ENCODE measurements at regions of chr15 and their contacts with region 1.

Region 1: DNA sequence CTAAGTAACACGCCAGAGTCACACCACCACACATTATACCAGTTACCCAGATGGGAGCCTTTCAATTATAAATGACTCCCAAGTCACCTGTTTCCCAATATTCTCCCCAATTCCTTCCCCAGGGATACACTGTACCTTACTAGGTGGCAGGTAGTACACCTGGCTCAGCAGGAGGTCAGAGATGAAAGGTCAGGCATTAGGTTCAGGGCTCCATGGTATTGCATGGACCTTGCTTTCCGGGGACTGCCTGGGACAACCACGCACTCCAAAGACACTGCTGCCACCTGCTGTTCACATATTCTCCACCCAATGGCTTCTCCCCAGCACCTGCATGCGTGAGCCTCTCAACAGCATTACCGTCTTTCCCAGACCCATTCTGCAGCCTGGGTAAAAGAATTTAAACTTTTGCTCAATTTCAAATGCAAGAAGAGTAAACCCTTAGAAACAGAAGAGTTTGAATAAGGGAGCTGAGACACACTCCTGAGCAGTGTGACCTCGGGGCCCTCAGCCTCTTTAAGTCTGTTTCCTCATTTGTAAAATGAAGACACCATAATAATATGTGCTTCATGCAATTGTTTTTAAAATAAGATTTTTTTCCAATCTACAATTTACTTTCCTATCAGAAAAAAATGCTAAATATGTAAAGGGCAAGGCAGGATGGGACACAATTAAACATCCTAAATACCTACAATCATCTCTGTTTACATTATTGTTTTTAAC is 28.0 kb upstream of the LACTB start:
- DNase-seq: peak; percentile 56
- H3K4me3 Mint-ChIP-seq: no peak overlapping the region
- H3K27ac Mint-ChIP-seq: no peak overlapping the region
- H3K4me1 Mint-ChIP-seq: peaks cover 5% of the 10 kb centered on the region
- H3K27me3 Mint-ChIP-seq: peaks cover 4% of the 10 kb centered on the region

Region 2: GRCh38 chr15:62782039-62782791 is 311.4 kb before region 1 on chr15:
- intact Hi-C with region 1: loop called (anchors 1 kb)
- DNase-seq: no peak
- H3K4me3 Mint-ChIP-seq: no peak overlapping the region
- H3K27ac Mint-ChIP-seq: no peak overlapping the region
- H3K4me1 Mint-ChIP-seq: no peaks in the 10 kb centered on the region
- H3K27me3 Mint-ChIP-seq: peaks cover 3% of the 10 kb centered on the region

Region 3: GRCh38 chr15:63048115-63048775 is 45.4 kb before region 1 on chr15:
- intact Hi-C with region 1: loop called (anchors 1 kb)
- DNase-seq: peak; percentile 79
- H3K4me3 Mint-ChIP-seq: peak overlapping the region; percentile 92
- H3K27ac Mint-ChIP-seq: no peak overlapping the region
- H3K4me1 Mint-ChIP-seq: peaks cover 20% of the 10 kb centered on the region
- H3K27me3 Mint-ChIP-seq: peaks cover 55% of the 10 kb centered on the region

Region 4: GRCh38 chr15:63122002-63122893 is 28.6 kb after region 1 on chr15:
- intact Hi-C with region 1: no loop called
- DNase-seq: peak; percentile 83
- H3K4me3 Mint-ChIP-seq: peak overlapping the region; percentile 93
- H3K27ac Mint-ChIP-seq: peak overlapping the region; percentile 83
- H3K4me1 Mint-ChIP-seq: peaks cover 21% of the 10 kb centered on the region
- H3K27me3 Mint-ChIP-seq: no peaks in the 10 kb centered on the region

Region 5: DNA sequence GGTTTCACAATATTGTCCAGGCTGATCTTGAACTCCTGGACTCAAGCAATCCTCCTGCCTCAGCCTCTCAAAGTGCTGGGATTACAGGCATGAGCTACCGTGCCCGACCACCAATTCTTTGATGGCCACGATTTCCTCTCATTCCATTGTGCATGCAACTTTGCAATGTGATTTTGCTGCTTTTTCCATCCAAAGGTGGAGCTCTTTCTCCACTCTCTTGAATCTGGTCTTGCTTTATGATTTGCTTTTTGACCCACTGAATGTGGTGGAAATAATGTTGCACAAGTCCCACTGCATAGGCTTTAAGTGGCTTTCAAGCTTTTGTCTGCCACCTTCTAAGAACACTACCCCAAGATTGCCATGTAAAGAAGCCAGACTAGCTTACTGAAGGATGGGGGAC is 53.0 kb after region 1 on chr15:
- intact Hi-C with region 1: no loop called
- DNase-seq: no peak
- H3K4me3 Mint-ChIP-seq: no peak overlapping the region
- H3K27ac Mint-ChIP-seq: no peak overlapping the region
- H3K4me1 Mint-ChIP-seq: peaks cover 3% of the 10 kb centered on the region
- H3K27me3 Mint-ChIP-seq: no peaks in the 10 kb centered on the region

Region 6: DNA sequence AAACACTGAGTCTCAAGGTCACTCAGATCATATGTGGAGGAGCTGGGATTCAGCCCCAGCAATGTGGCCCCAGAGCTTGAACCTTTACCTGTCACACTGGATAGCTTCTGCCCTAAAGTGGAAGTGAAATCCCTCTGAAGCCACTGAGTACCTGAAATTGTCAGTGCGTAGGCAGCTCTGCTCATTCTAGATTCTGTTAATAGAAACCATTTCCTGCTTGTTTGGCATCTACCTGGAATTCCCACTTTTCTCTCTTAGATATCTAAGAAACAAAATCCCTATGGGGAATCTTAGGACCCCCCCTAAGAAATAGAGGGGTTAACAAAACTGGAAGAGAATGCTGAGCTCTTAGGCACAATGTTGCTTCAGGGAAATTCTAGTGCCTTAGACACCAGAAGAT is 533.3 kb after region 1 on chr15:
- intact Hi-C with region 1: no loop called
- DNase-seq: no peak
- H3K4me3 Mint-ChIP-seq: no peak overlapping the region
- H3K27ac Mint-ChIP-seq: no peak overlapping the region
- H3K4me1 Mint-ChIP-seq: no peaks in the 10 kb centered on the region
- H3K27me3 Mint-ChIP-seq: no peaks in the 10 kb centered on the region

Measured in activated T-helper 1 cell treated with anti-CD3 and anti-CD28 coated beads, Interleukin-12 subunit alpha, Interleukin-12 subunit beta, Interleukin-2, Interleukin-4 antibody, amounts not matched to agents 30 ng/mL and 10 ng/mL and 1 ng/mL, durations not matched to agents 14 hours and 24 hours and 36 hours (primary cell).